PC-3 (cell line): ENCODE measurements at regions of chr10 and their contacts with region 1.

Region 1: GRCh38 chr10:3452173-3452626 is 279.6 kb upstream of the PITRM1 start:
- DNase-seq: peak; percentile 25
- ATAC-seq: peak; percentile 62
- H3K4me3 ChIP-seq: no peak overlapping the region
- H3K27ac ChIP-seq: peak overlapping the region; percentile 45; the same call in 1 of the 2 replicates
- H3K4me1 ChIP-seq: peaks cover 18% of the 10 kb centered on the region
- H3K27me3 ChIP-seq: no peaks in the 10 kb centered on the region
- CTCF ChIP-seq: no peak

Region 2: GRCh38 chr10:3068201-3068967 is 383.8 kb before region 1 on chr10:
- CTCF ChIA-PET with region 1: no interaction called
- POLR2A ChIA-PET with region 1: no interaction called
- intact Hi-C with region 1: no loop called
- DNase-seq: peak; percentile 29
- ATAC-seq: peak; percentile 38
- H3K4me3 ChIP-seq: peak overlapping the region; percentile 80
- H3K27ac ChIP-seq: peak overlapping the region; percentile 30; the same call in 1 of the 2 replicates
- H3K4me1 ChIP-seq: peaks cover 18% of the 10 kb centered on the region
- H3K27me3 ChIP-seq: no peaks in the 10 kb centered on the region
- CTCF ChIP-seq: no peak

Region 3: DNA sequence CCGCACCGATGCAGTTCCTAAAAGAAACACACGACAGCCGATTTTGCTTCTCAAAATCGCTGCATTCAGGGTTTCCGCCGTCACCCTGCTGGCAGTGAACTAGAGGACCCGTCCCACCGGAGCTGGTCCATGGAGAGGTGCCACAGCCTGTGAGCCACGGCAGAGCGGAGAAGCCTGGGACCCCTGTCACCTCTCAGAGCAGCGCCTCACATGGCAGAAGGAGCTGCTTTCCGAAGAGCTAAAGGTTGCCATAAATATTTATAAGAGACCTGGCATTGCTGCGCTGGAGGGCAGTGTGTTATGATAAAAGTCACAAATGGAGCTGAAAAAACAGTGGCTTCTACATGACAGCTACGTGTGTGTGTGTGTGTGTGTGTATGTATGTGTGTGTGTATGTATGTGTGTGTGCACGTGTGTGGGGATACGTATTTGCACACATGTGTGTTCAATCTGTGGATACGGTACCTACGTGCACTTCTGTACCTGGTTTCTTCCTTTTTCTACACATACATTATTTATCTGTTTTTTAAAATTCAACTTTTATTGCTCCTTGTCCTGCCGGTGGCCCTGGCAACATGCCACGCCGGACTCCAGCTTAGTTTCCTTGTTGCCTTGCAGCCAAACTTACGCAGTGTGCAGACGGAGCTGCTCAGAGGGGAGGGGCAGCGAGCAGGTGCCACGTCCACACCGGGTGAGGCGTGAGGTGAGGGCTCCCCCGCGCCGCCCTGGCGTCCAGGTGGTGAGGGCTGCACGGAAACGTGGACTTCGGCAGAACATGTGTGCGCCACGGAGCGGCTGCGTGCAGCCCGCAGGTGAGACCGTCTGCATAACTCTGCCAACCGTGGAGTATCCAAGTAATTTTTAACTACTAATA is 164.4 kb before region 1 on chr10:
- CTCF ChIA-PET with region 1: interaction called, 11 read pairs
- POLR2A ChIA-PET with region 1: no interaction called
- intact Hi-C with region 1: no loop called
- DNase-seq: peak; percentile 14
- ATAC-seq: peak; percentile 75
- H3K4me3 ChIP-seq: peak overlapping the region; percentile 64
- H3K27ac ChIP-seq: no peak overlapping the region
- H3K4me1 ChIP-seq: no peaks in the 10 kb centered on the region
- H3K27me3 ChIP-seq: no peaks in the 10 kb centered on the region
- CTCF ChIP-seq: 0 out of 2 replicates have a peak, but pooled peaks have one; percentile 30

Region 4: GRCh38 chr10:3472287-3473051 is 20.3 kb after region 1 on chr10:
- CTCF ChIA-PET with region 1: no interaction called
- POLR2A ChIA-PET with region 1: no interaction called
- intact Hi-C with region 1: no loop called
- DNase-seq: peak; percentile 27
- ATAC-seq: no peak; the same call in 1 of the 2 replicates
- H3K4me3 ChIP-seq: peak overlapping the region; percentile 24
- H3K27ac ChIP-seq: peak overlapping the region; percentile 63
- H3K4me1 ChIP-seq: peaks cover 43% of the 10 kb centered on the region
- H3K27me3 ChIP-seq: no peaks in the 10 kb centered on the region
- CTCF ChIP-seq: no peak